Uterus (tissue), 4 donors: ENCODE measurements at regions of chr10 and their contacts with region 1.

Region 1: DNA sequence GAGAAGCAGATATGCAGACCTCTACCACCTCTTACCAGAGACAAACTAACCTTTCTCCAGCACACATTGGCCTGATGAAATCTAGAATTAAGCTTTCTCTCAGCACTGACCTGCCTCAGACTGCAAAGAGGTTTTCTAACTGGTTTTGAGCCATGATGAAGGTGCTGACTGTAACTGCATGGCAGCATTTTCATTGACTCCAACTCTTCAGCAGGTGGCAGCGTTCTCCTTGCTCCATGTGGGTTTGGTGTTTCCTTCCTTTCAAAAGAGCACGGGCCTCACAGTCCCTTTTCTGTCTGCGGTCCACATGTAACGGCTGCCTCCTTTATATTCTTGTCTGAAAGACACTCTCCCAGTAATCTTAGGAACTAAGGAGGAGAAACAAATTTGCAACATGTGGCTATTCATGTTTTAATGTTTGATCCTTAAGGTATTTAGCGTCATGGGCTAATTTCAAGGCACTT is 12.6 kb downstream of the KLLN start:
- DNase-seq: peak; percentile 61 to 76
- H3K4me3 ChIP-seq: no peak overlapping the region
- H3K27ac ChIP-seq: peak overlapping the region; percentile 42 to 48
- H3K4me1 ChIP-seq: no peaks in the 10 kb centered on the region
- H3K27me3 ChIP-seq: no peaks in the 10 kb centered on the region
- CTCF ChIP-seq: peak; percentile 63 to 79 (median 74)
- POLR2A ChIP-seq: no peak

Region 2: DNA sequence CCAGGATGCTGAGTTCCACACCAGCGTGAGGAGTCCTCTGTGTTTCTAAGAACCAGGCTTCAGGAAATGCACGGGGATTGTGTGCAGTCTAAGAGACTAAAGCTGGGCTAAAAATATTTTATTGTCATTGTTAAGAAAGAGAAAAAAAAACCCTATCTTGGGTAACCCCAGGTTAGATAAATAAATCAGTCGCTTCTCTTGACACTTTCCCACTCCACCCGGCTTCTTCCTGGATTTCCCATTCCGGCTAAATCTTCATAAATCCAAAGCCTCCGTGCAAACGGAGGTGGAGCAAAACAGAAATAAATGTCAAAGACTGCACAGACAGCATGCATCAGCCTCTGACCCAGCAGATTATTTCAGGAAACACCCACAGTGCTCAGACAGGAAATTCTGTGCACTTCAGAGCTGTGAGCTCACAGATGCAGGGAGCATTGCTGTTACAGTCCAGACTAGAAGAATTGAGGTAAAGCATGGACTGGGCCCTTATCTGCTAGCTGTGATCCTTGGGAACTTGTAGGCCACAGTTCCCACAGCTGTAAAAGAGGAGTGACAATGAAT is 1439.4 kb before region 1 on chr10:
- intact Hi-C with region 1: no loop called
- DNase-seq: peak; percentile 28 to 37
- H3K4me3 ChIP-seq: no peak overlapping the region
- H3K27ac ChIP-seq: peak overlapping the region; percentile 29 to 69
- H3K4me1 ChIP-seq: peaks cover 0 to 10% of the 10 kb centered on the region in 2 donors
- H3K27me3 ChIP-seq: no peaks in the 10 kb centered on the region
- CTCF ChIP-seq: no peak
- POLR2A ChIP-seq: no peak

Region 3: DNA sequence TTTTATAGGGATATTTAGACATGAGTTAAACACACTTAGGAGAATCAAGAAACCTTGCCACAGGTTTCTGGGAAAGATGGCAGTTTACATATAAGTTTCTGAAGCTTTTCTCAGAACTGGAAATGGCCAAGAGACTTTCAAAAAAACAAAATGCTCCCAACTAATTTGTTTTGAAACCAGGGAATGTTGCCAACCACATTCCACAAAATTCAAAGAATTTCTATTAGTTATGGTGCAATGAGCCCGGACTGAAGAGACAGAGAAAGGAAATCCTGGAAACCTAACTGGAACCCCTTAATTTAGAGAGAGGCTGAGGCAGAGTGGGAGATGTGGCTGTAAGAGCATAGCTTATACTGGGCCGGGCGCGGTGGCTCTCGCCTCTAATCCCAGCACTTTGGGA is 141.2 kb after region 1 on chr10:
- intact Hi-C with region 1: no loop called
- DNase-seq: no peak
- H3K4me3 ChIP-seq: no peak overlapping the region
- H3K27ac ChIP-seq: no peak overlapping the region
- H3K4me1 ChIP-seq: no peaks in the 10 kb centered on the region
- H3K27me3 ChIP-seq: no peaks in the 10 kb centered on the region
- CTCF ChIP-seq: no peak
- POLR2A ChIP-seq: no peak

Region 4: GRCh38 chr10:88553116-88553752 is 702.5 kb after region 1 on chr10:
- intact Hi-C with region 1: loop called (anchors 10 kb)
- DNase-seq: peak; percentile 67 to 71
- H3K4me3 ChIP-seq: no peak overlapping the region
- H3K27ac ChIP-seq: peak overlapping the region; percentile 16 to 49
- H3K4me1 ChIP-seq: peaks cover 0 to 16% of the 10 kb centered on the region in 2 donors
- H3K27me3 ChIP-seq: no peaks in the 10 kb centered on the region
- CTCF ChIP-seq: peak; percentile 78 to 93 (median 83)
- POLR2A ChIP-seq: no peak